Mammary epithelial cell (primary cell): ENCODE measurements at regions of chr7 and their contacts with region 1.

Region 1: DNA sequence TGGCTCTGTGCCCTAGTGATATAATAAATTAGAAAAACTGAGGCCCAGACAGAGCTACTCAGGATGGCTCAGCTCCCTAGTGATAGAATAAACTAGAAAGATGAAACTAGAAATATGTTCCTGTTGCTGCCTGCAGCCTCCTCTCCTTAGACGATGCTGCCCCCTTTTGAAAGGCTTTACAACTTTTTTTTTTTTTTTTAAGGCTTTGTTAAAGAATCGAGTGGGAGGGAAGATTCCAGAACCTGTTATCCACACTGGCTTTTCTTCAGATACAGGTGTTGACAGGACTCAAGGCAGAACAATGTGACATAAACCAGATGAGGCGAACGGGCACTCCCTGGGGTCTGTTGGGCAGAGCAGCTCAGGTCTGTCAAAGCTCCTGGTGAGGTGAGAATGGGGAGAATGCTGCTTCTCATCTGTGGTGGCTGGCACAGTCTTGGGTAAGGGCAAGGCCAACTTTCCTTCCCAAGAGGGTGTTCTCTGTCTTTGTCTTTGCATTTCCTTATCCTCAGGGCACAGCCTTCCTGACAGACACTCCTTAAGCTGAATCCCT is 175.1 kb downstream of the COBL start:
- DNase-seq: peak; percentile 48
- H3K4me3 ChIP-seq: no peak overlapping the region
- H3K27ac ChIP-seq: no peak overlapping the region
- H3K4me1 ChIP-seq: peaks cover 36% of the 10 kb centered on the region
- H3K27me3 ChIP-seq: no peaks in the 10 kb centered on the region
- CTCF ChIP-seq: peak; percentile 63 to 75

Region 2: GRCh38 chr7:50632561-50633413 is 508.7 kb before region 1 on chr7:
- CTCF ChIA-PET with region 1: no interaction called
- dilution Hi-C with region 1: no loop called
- in situ Hi-C with region 1: no loop called
- intact Hi-C with region 1: loop called (anchors 10 kb)
- DNase-seq: peak; percentile 70
- H3K4me3 ChIP-seq: no peak overlapping the region
- H3K27ac ChIP-seq: no peak overlapping the region
- H3K4me1 ChIP-seq: peaks cover 3% of the 10 kb centered on the region
- H3K27me3 ChIP-seq: no peaks in the 10 kb centered on the region
- CTCF ChIP-seq: peak; percentile 92 to 94

Region 3: DNA sequence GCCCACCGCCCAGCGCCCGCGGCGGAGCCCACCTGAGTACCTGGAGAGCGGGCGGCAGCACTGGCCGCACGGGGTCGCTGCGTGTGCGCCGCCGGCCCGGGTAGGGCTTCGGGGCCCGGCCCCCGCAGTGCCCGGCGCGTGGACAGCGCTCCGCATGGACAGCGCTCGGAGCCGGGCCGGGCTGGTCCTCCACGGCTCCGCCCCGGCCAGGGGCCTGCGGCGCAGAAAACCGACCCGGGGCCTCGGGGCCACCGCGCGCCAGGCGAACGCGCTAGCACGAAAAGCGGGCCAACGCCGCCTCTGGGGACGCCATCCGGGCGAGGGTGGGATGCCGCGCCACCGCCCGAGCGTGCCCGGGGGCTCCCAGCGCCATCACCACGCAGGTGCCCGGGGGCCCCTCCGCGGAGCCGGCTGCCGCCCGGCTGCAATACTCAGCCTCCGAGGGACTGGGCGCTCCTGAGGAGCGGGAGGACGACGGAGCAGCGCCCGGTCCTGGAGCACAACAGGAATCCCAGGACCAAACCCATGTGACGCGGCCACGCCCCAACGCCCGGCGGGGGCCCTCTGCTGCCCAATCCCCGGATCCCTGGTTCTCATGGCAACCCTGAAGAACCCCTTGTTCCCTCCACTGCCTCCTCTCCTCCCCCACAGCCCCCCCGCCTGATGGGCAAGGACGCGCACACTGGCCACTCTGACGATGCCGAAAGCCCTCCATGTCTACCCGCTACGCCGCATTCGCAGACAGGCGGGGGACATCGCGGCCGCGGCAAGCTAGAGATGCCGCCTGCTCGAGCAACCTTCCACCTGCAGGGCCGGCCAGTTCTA is 358.9 kb before region 1 on chr7 and contains the start of gene GRB10:
- CTCF ChIA-PET with region 1: no interaction called
- dilution Hi-C with region 1: no loop called
- in situ Hi-C with region 1: no loop called
- intact Hi-C with region 1: loop called (anchors 5 kb)
- DNase-seq: no peak
- H3K4me3 ChIP-seq: peak within 1 kb of the TSS in 2 of 3 experiments; percentile 29 to 31
- H3K27ac ChIP-seq: no peak within 1 kb of the TSS
- H3K4me1 ChIP-seq: no peaks in the 10 kb centered on the region
- H3K27me3 ChIP-seq: peaks cover 3% of the 10 kb centered on the region
- CTCF ChIP-seq: no peak
- total RNA-seq, gene GRB10: 28.4 to 48.7 TPM

Region 4: DNA sequence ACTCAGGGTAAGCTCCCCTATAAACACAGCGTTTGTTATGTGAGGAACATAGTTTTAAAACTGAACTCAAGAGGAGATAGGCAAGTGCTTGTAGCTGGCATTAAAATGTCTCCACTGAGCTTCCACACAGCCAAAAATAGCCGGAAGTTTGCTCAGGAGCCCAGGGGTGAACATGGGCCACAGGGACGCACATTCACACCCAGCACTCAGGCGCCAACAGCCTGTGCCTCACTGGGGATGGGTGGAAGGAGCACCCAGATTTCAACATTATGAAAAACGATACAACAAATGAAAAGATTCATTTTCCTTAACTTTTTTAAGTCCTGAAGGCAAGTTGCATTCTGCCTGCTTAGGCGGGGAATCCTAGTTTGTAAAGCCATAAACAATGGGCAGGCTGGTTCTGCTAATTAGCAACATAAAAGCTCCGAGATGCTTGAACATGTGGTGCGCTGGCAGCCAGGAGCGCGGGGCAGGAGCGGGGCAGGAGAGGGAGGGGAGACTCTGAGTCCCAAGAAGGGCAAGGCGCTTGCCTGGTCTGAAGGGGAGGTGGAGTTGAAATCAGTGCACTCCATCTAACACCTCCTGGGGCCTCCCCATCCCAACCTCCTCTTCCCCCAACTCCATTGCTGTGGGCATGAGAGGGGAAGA is 60.8 kb before region 1 on chr7:
- CTCF ChIA-PET with region 1: interaction called, 4 read pairs
- dilution Hi-C with region 1: no loop called
- in situ Hi-C with region 1: no loop called
- intact Hi-C with region 1: loop called (anchors 1 kb)
- DNase-seq: no peak
- H3K4me3 ChIP-seq: no peak overlapping the region
- H3K27ac ChIP-seq: no peak overlapping the region
- H3K4me1 ChIP-seq: no peaks in the 10 kb centered on the region
- H3K27me3 ChIP-seq: peaks cover 4% of the 10 kb centered on the region
- CTCF ChIP-seq: no peak

Region 5: GRCh38 chr7:51308265-51308664 is 166.7 kb after region 1 on chr7:
- CTCF ChIA-PET with region 1: no interaction called
- dilution Hi-C with region 1: no loop called
- in situ Hi-C with region 1: no loop called
- intact Hi-C with region 1: no loop called
- DNase-seq: no peak
- H3K4me3 ChIP-seq: no peak overlapping the region
- H3K27ac ChIP-seq: no peak overlapping the region
- H3K4me1 ChIP-seq: no peaks in the 10 kb centered on the region
- H3K27me3 ChIP-seq: peaks cover 2% of the 10 kb centered on the region
- CTCF ChIP-seq: no peak